ENCODE measurements at regions of chr3 and their contacts with region 1.

Region 1: DNA sequence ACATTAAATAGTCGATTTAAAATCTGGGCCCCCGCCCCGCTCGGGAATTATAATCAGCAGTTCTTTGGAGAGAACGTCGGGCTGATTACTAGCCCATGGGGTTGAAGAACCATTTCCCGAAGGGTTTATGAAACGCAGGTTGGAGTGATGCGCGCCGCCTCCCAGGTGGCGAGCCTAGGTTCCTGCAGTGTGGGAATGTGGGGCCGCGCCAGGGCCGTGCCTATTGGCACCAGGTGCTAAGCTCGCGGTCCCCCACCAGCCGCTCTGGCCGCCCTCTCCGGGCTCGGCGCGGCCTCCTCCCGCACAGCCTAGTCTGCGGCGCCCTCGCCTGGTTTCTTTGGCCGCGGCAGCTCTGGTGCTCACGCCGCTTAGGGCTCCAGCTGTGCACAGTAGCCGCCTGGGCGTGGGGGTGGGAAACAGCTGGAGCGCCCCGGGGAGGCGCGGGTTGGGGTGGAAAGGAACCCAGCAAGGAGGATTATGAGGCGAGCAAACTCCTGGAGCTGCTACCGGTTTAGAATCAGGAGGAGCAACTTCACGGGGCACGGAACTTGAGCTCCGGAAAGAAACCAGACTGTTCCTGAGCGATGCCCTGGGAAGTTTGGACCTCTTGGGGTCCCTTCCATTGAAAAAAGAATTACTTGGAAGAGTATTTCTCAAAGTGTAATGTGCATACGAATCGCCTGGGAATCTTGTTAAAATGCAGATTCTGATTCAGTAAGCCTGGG is 5.6 kb upstream of the MECOM start:
- DNase-seq: peak; percentile 82
- ATAC-seq: peak; percentile 94
- H3K4me3 Mint-ChIP-seq: peak overlapping the region; percentile 13
- H3K27ac Mint-ChIP-seq: no peak overlapping the region
- H3K4me1 Mint-ChIP-seq: peaks cover 11% of the 10 kb centered on the region
- H3K27me3 Mint-ChIP-seq: peaks cover 72% of the 10 kb centered on the region

Region 2: GRCh38 chr3:168865022-168865551 is 804.0 kb before region 1 on chr3:
- CTCF ChIA-PET with region 1: no interaction called
- POLR2A ChIA-PET with region 1: no interaction called
- intact Hi-C with region 1: loop called in 1 of 2 experiments (anchors 2 kb)
- DNase-seq: peak; percentile 3
- ATAC-seq: no peak
- H3K4me3 Mint-ChIP-seq: no peak overlapping the region
- H3K27ac Mint-ChIP-seq: no peak overlapping the region
- H3K4me1 Mint-ChIP-seq: no peaks in the 10 kb centered on the region
- H3K27me3 Mint-ChIP-seq: peaks cover 3% of the 10 kb centered on the region

Region 3: GRCh38 chr3:169149349-169149890 is 519.7 kb before region 1 on chr3:
- CTCF ChIA-PET with region 1: interaction called, 22 read pairs
- POLR2A ChIA-PET with region 1: no interaction called
- intact Hi-C with region 1: loop called (anchors 1 to 2 kb)
- DNase-seq: peak; percentile 88
- ATAC-seq: peak; percentile 93
- H3K4me3 Mint-ChIP-seq: peak overlapping the region; percentile 44
- H3K27ac Mint-ChIP-seq: no peak overlapping the region
- H3K4me1 Mint-ChIP-seq: peaks cover 20% of the 10 kb centered on the region
- H3K27me3 Mint-ChIP-seq: peaks cover 63% of the 10 kb centered on the region

Region 4: DNA sequence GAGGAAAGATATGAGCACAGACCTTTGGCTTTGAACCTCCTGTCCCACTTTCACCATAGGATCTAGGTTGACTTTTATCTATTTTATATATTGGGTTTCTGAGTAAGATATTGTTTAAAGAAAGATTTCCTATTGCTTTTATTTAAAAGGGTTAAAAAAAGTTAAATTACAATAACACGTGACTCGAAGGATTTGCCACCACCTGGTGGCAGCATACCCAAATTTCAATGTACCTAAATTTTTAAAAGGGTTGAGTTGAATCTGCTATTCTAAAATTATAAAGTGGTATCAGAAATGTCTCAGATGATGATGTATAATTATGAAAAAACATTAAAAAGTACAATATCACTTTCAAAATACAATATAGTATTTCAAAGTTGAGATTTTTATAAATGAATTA is 374.0 kb before region 1 on chr3:
- CTCF ChIA-PET with region 1: no interaction called
- POLR2A ChIA-PET with region 1: no interaction called
- intact Hi-C with region 1: loop called in 1 of 2 experiments (anchors 5 kb)
- DNase-seq: peak; percentile 18
- ATAC-seq: no peak
- H3K4me3 Mint-ChIP-seq: no peak overlapping the region
- H3K27ac Mint-ChIP-seq: no peak overlapping the region
- H3K4me1 Mint-ChIP-seq: no peaks in the 10 kb centered on the region
- H3K27me3 Mint-ChIP-seq: peaks cover 7% of the 10 kb centered on the region

Region 5: DNA sequence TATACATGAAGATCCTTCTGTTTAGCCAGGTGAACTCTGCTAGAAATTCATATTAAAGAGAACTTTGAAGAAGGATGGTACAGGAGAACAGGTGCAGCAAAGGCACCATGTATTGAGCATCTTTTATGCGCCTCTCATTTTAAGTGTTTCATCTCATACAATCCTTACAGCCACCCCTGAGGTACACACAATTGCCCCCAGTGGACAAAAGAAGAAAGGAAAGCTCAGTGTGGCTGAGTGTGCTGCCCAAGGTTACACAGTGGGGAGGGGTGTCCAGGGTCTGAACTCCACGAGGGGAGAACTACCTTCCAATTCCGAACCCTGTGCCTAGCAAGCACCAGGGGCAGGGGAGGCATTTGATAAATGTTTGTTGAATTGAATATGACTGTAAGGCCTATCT is 104.2 kb before region 1 on chr3:
- CTCF ChIA-PET with region 1: no interaction called
- POLR2A ChIA-PET with region 1: no interaction called
- intact Hi-C with region 1: loop called in 1 of 2 experiments (anchors 5 kb)
- DNase-seq: no peak
- ATAC-seq: peak; percentile 44
- H3K4me3 Mint-ChIP-seq: no peak overlapping the region
- H3K27ac Mint-ChIP-seq: no peak overlapping the region
- H3K4me1 Mint-ChIP-seq: no peaks in the 10 kb centered on the region
- H3K27me3 Mint-ChIP-seq: peaks cover 2% of the 10 kb centered on the region

Region 6: DNA sequence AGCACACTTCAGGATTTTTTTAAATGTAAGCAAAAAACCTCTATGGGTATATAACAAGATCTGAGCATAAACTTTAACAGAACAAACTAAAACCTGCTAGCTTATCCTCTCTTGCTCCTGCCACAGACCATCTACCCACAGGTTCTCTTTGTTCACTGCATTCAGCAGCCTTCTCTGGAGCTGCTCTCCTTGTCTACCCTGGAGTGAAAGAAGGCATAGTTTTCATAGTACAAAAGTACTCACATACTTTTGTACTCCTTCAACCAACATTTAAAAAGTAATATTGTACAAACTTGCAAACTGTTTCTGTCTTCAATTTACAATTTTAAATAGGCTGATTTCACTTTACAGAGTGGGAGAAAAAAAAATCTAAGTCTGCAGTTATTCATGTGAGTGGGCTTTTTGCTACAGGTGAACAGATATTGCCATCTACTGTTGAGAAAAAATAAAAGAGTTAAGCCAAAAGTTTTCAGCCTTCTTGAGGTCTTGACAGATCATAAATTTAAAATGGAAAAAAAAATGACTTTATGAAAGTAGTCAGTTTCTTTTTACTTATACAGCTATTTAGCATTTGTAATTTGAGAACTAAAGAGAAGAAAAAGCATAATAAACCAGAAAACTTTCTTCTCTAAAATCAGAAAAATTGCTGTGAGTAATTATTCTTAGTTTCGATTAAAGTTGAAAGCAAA is 75.4 kb after region 1 on chr3:
- CTCF ChIA-PET with region 1: interaction called, 10 read pairs
- POLR2A ChIA-PET with region 1: no interaction called
- intact Hi-C with region 1: no loop called
- DNase-seq: no peak
- ATAC-seq: no peak
- H3K4me3 Mint-ChIP-seq: no peak overlapping the region
- H3K27ac Mint-ChIP-seq: no peak overlapping the region
- H3K4me1 Mint-ChIP-seq: peaks cover 16% of the 10 kb centered on the region
- H3K27me3 Mint-ChIP-seq: peaks cover 16% of the 10 kb centered on the region

Measured in activated CD4-positive, alpha-beta T cell treated with anti-CD3 and anti-CD28 coated beads for 36 hours (primary cell).